Heart left ventricle (tissue), 16 donors: ENCODE measurements at regions of chr5 and their contacts with region 1.

Region 1: DNA sequence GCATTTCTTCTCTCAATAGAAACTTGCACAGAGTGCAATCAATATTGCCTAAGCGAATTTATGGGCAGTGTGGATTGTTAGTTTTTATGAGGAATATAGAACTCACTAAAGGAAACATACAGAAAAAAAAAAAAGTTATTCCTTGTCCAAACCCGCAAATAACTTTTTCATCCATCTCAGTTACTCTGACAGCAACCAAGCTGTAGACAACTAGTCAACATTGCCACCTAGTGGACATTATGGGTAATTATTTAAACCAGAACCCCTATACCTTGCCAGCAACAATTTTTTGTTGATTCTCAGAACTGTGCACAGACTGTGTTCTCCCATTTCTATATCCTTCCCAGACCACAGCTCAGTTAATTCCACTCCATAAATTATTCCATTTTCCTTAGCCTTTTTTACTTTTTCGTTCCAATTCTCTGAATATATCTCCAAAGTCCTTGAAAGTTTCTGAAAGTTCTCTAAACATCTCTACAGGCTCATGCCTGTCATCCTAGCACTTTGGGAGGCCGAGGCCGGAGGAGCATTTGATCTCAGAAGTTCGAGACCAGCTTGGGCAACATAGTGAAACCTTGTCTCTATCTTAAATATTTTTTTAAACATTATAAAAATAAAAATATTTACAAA is 2.6 kb upstream of the AFAP1L1 start:
- DNase-seq: no peak
- ATAC-seq: no peak
- H3K4me3 ChIP-seq: no peak overlapping the region
- H3K27ac ChIP-seq: peak overlapping the region in 5 of 12 donors; percentile 7 to 50 (median 39)
- H3K4me1 ChIP-seq: peaks cover 0 to 29% (median 17%) of the 10 kb centered on the region in 12 donors
- H3K27me3 ChIP-seq: peaks cover 0 to 24% (median 0%) of the 10 kb centered on the region in 9 donors
- CTCF ChIP-seq: peak; percentile 56 to 92 (median 75)
- POLR2A ChIP-seq: no peak

Region 2: DNA sequence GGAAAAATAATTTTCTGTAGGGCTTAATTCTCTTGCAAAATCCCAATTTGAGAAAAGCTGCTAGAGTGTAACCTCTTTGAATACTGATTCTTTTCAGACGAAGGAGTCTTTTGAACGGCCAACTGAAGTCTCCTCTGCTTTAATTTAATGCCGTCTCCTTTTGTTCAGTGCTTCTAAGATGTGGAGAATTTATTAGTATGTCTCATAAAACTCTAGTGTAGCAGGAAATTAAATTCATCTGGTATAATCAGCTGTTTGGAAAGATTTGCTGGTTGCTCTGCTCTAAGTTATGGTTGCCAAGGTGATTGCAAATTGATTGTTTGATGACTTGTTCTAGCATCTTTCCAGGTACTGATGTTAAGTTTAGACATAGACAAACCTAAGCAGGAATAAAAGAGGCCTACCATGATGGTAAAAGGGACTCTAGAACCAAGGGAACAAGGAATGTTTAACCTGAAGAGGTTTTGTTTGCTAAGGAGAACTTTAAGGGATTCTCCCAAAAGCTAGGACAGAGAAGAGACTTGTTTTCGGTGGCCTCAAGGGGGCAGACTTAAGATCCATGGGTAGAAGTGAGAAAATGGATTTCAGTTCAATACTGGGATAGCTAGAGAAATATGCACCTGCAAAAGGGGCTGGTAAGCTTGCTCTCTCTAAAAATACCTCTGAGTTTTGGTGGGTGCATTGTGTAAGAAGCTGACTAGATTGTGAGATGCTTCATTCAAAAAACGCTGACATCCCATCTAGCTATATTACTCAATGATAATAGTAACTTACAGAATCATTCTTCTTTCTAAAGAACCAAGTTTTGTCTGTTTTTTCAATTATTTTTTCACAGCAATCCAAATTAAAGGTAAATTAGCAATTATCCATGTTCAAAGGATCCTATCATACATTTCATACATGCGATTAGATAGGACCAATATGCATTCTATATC is 448.3 kb before region 1 on chr5:
- intact Hi-C with region 1: no loop called
- DNase-seq: no peak
- ATAC-seq: no peak
- H3K4me3 ChIP-seq: no peak overlapping the region
- H3K27ac ChIP-seq: no peak overlapping the region
- H3K4me1 ChIP-seq: peaks cover 0 to 47% (median 6%) of the 10 kb centered on the region in 12 donors
- H3K27me3 ChIP-seq: no peaks in the 10 kb centered on the region
- CTCF ChIP-seq: peak; percentile 38 to 70 (median 58)
- POLR2A ChIP-seq: no peak

Region 3: DNA sequence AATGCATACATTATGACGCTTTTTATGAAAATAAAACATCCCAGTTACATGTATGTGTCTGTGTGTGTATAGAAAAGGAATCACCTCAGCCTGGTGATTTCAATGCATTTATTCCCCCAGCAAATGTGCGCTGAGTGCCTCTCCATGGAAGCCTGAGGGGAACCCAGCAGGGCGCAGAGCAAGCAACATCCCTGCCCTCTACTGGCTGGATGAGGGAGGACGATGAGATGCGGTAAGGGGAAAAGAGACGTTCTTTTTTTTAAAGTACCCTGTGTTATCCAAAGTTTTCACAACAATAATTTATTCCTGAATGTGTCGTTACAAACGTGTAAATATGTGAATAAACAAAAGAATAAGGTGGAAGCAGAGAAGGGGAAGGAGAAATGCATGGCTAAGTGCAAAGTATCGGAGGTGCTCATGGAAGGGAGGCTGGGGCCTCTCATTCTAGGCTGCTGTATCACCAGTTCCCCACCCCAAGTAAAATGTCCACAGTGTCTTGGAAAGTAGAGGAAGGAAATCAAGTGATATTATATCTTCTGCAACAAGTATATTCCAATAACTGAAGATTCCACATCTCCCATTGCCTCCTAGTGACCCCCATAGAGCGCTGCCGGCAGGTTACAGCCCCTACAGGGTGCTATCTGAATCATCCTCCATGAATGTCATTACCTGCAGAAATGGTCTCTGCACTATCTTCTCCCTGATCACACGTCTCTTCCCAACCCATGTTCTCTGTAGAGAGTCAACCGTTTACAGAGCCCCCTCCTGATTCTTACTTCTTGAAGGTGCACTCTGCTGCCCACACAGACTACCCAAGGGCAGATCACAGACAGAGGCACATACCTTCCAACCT is 140.8 kb before region 1 on chr5:
- intact Hi-C with region 1: loop called in 2 of 10 experiments (anchors 2 to 5 kb)
- DNase-seq: peak in 1 of 5 donors; percentile 42
- ATAC-seq: peak in 3 of 4 donors; percentile 53 to 79 (median 68)
- H3K4me3 ChIP-seq: no peak overlapping the region
- H3K27ac ChIP-seq: no peak overlapping the region
- H3K4me1 ChIP-seq: peaks cover 0 to 14% (median 8%) of the 10 kb centered on the region in 12 donors
- H3K27me3 ChIP-seq: no peaks in the 10 kb centered on the region
- CTCF ChIP-seq: peak; percentile 47 to 80 (median 63)
- POLR2A ChIP-seq: no peak

Region 4: DNA sequence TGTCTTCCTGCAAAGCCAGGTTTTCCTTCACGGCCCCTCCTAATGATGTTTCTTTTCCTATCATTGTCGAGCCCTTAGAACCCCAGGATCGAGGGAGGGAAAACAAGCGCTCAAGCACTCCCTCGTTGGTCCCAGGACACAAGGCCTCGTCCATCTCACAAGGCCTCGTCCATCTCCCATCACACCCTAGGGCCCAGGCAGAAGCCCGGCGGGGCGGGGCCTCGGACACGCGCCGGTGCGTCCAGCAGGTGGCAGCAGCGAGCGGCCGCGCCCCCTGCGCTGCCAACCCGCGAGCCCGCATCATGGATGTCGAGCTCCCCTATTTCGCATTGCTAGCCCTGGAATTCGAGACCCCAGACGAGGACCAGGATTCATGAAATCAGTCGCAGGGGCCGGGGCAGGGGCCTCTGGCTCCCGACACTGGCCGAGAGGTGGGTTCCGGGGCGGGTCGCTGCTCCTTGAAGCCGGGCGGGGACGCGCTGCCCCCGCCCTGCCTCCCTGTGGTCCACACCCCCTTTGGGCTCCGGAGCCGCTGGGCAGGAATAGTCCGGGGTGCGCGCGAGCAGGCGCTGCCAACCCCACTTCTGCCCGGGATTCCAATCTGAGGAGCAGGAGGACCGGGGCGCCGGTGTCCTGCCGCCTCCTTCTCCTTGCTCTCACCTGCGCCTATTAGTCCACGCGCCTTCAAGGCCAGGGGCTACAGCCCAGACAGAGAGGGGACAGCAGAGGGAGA is 127.7 kb before region 1 on chr5 and contains the start of gene ABLIM3:
- intact Hi-C with region 1: no loop called
- DNase-seq: peak; percentile 70 to 89 (median 77)
- ATAC-seq: peak; percentile 44 to 90 (median 82)
- H3K4me3 ChIP-seq: peak within 1 kb of the TSS; percentile 66 to 92 (median 80)
- H3K27ac ChIP-seq: peak within 1 kb of the TSS; percentile 78 to 97 (median 92)
- H3K4me1 ChIP-seq: peaks cover 0 to 54% (median 31%) of the 10 kb centered on the region in 12 donors
- H3K27me3 ChIP-seq: no peaks in the 10 kb centered on the region
- CTCF ChIP-seq: peak; percentile 91 to 99 (median 95)
- POLR2A ChIP-seq: peak in 1 of 2 donors; percentile 43
- total RNA-seq, gene ABLIM3: 70.0 to 175 (median 97.8) TPM

Region 5: GRCh38 chr5:149304195-149305078 is 35.4 kb after region 1 on chr5:
- intact Hi-C with region 1: loop called in 1 of 10 experiments (anchors 5 kb)
- DNase-seq: peak in 4 of 5 donors; percentile 44 to 62 (median 53)
- ATAC-seq: peak; percentile 50 to 75 (median 54)
- H3K4me3 ChIP-seq: no peak overlapping the region
- H3K27ac ChIP-seq: peak overlapping the region in 11 of 12 donors; percentile 11 to 85 (median 58)
- H3K4me1 ChIP-seq: peaks cover 0 to 59% (median 28%) of the 10 kb centered on the region in 12 donors
- H3K27me3 ChIP-seq: no peaks in the 10 kb centered on the region
- CTCF ChIP-seq: no peak
- POLR2A ChIP-seq: no peak

Region 6: DNA sequence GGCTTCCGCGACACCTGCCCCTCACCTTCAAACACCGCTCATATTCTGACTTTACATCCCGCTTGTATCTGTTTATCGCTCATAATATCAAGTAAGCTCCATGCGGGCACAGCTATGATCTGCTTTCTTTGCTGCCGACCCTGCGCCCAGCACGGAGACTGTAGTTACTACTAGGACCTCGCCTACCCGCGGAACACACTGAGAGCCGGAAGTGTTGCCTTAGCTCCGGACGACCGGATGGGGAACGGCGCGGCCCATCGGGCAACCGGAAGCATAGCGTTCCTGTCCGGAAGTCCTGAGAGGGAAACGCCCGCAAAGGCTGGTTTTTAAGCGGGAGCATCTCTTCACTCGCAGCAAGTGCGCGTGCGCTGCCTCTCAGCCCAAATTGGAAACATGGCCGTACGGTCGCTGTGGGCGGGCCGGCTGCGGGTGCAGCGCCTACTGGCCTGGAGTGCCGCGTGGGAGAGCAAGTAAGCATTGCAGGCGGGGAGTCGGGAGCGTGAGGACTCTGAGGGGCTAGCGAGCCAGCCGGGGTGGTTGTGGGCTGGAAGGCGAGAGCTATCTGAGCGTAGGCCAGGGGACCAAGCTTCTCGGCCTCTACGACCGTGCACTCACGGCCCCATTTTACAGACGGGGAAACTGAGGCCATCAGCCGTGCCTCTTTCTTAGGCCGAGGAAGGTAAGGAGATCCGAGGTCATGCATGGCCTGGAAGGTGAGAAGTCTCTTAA is 76.3 kb after region 1 on chr5 and contains the start of gene GRPEL2:
- intact Hi-C with region 1: loop called in 1 of 10 experiments (anchors 5 kb)
- DNase-seq: peak; percentile 95 to 98 (median 98)
- ATAC-seq: peak; percentile 95 to 98 (median 98)
- H3K4me3 ChIP-seq: peak within 1 kb of the TSS; percentile 49 to 86 (median 74)
- H3K27ac ChIP-seq: peak within 1 kb of the TSS; percentile 69 to 93 (median 86)
- H3K4me1 ChIP-seq: peaks cover 0 to 52% (median 16%) of the 10 kb centered on the region in 12 donors
- H3K27me3 ChIP-seq: no peaks in the 10 kb centered on the region
- CTCF ChIP-seq: no peak
- POLR2A ChIP-seq: peak in 1 of 2 donors; percentile 68
- total RNA-seq, gene GRPEL2: 6.7 to 14.0 (median 10.2) TPM

Region 7: DNA sequence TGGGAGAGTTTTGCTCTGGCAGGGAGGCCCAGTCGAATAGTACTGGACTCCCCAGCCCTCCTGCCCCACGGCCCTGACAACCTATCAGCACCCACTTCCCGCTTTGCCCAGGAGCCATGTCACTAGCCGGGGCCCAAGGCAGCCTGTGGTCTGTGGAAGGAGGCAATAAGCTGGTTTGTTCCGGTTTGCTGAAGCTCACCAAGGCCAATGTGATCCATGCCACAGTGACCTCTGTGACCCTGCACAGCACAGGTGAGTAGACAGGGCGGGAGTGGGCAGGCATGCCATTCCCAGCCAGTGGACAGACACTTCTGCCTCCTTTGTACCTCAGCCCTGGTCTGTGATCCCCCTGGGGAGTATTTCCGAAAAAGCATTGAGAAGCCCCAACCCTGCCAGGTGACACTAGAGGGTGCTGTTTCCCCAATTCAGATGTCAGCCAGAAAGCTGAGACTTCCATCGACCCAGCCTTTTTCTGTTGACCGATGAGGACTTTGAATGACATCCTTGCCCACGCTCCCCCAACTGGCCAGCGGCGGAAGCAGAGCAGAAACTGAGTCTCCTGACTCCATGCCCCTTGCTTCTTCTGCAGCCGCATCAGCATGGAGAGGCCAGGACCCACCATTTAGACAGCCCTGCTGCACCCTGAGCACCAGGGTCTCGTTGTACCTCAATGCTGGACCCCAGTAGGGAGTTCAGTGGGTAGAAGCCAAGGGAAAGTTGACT is 98.4 kb after region 1 on chr5:
- intact Hi-C with region 1: loop called in 9 of 10 experiments (anchors 1 to 5 kb)
- DNase-seq: peak in 4 of 5 donors; percentile 58 to 69 (median 64)
- ATAC-seq: peak in 3 of 4 donors; percentile 57 to 62 (median 60)
- H3K4me3 ChIP-seq: no peak overlapping the region
- H3K27ac ChIP-seq: peak overlapping the region in 1 of 12 donors; percentile 60
- H3K4me1 ChIP-seq: peaks cover 0 to 26% (median 10%) of the 10 kb centered on the region in 12 donors
- H3K27me3 ChIP-seq: no peaks in the 10 kb centered on the region
- CTCF ChIP-seq: peak; percentile 62 to 84 (median 81)
- POLR2A ChIP-seq: no peak

Region 8: GRCh38 chr5:149434162-149435014 is 165.3 kb after region 1 on chr5:
- intact Hi-C with region 1: loop called in 4 of 10 experiments (anchors 5 to 10 kb)
- DNase-seq: peak in 3 of 5 donors; percentile 60 to 64 (median 62)
- ATAC-seq: peak; percentile 14 to 27 (median 22)
- H3K4me3 ChIP-seq: no peak overlapping the region
- H3K27ac ChIP-seq: peak overlapping the region in 10 of 12 donors; percentile 8 to 97 (median 44)
- H3K4me1 ChIP-seq: peaks cover 7 to 47% (median 23%) of the 10 kb centered on the region in 12 donors
- H3K27me3 ChIP-seq: no peaks in the 10 kb centered on the region
- CTCF ChIP-seq: peak; percentile 82 to 94 (median 88)
- POLR2A ChIP-seq: no peak

Region 9: DNA sequence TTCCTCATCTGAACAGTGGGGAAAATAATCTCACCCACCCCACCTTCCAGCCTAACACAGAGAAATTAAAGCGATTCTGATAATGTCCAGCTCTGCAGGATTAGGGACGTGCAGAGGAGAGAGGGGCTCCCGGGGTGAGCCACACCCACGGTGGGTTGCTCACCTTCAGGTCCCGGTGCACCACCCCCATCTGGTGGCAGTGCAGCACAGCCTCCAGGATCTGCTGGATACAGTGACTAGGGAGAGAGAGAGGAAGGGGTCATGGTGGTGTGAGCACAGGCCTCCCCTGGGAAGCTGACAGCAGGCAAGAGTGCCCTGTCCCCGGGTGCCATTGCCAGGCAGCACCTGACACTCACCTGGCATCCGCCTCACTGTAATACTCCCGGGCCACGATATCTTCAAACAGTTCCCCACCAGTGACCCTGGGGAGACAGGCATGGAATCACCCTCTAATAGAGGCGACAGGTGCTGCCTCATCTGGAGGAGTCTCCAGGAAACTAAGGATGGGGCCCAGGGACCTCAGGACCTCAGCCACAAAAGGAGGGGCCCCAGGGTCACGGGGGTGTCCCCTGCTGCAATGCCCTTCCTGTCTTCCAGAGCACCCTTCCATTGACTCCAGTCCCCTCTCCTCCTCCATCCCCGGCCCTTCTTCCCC is 987.5 kb after region 1 on chr5:
- intact Hi-C with region 1: no loop called
- DNase-seq: no peak
- ATAC-seq: peak in 1 of 4 donors; percentile 14
- H3K4me3 ChIP-seq: no peak overlapping the region
- H3K27ac ChIP-seq: no peak overlapping the region
- H3K4me1 ChIP-seq: peaks cover 0 to 10% (median 0%) of the 10 kb centered on the region in 12 donors
- H3K27me3 ChIP-seq: no peaks in the 10 kb centered on the region
- CTCF ChIP-seq: peak in 4 of 12 donors; percentile 6 to 26 (median 16)
- POLR2A ChIP-seq: no peak